CD4-positive, alpha-beta memory T cell (primary cell): ENCODE measurements at regions of chr7 and their contacts with region 1.

Region 1: GRCh38 chr7:115208710-115209560 is 287.0 kb downstream of the MDFIC start:
- DNase-seq: no peak
- H3K4me3 ChIP-seq: no peak overlapping the region
- H3K4me3 Mint-ChIP-seq: no peak overlapping the region
- H3K27ac ChIP-seq: no peak overlapping the region
- H3K27ac Mint-ChIP-seq: peak overlapping the region in 2 of 7 donors; percentile 50 to 70
- H3K4me1 ChIP-seq: peaks cover 6% of the 10 kb centered on the region
- H3K4me1 Mint-ChIP-seq: peaks cover 6 to 17% (median 7%) of the 10 kb centered on the region in 4 donors
- H3K27me3 ChIP-seq: no peaks in the 10 kb centered on the region
- H3K27me3 Mint-ChIP-seq: peaks cover 0 to 4% of the 10 kb centered on the region in 2 donors

Region 2: DNA sequence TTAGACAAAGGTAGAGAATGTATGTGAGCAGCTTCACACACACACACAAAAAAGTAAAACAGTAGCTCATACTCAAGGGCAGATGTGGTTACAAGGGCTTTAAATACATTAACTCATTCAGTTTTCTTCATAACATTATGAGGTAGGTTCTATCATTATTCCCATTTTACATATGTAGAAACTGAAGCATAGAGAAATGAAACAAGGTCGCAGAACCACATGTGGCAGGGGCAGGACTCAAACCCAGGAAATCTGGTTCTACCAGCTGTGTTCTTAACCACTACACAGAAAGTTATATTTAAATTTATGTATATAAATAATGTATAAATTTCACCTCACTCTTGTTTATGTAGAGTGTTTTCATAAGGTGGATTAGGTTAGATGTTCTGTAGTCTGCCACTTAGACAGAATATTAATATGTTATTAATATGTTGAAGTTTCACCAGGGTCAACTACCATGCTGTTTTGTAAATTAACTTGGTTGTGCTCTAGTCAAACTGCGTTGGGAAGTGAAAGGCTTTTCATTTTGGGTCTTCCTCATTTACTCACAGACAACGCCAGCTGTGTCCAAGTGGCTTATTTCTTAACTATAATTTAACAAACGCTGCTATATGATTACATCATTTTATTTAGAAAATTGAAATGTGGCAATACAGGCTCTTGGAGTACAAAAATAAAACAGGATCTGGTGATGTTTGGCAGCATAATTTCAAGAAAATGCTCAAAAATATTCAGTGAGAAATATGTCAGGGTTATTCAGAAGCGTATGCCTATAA is 148.7 kb before region 1 on chr7:
- CTCF ChIA-PET with region 1: no interaction called
- POLR2A ChIA-PET with region 1: no interaction called
- intact Hi-C with region 1: loop called (anchors 5 kb)
- DNase-seq: no peak
- H3K4me3 ChIP-seq: no peak overlapping the region
- H3K4me3 Mint-ChIP-seq: no peak overlapping the region
- H3K27ac ChIP-seq: no peak overlapping the region
- H3K27ac Mint-ChIP-seq: no peak overlapping the region
- H3K4me1 ChIP-seq: no peaks in the 10 kb centered on the region
- H3K4me1 Mint-ChIP-seq: peaks cover 0 to 1% (median 0%) of the 10 kb centered on the region in 4 donors
- H3K27me3 ChIP-seq: no peaks in the 10 kb centered on the region
- H3K27me3 Mint-ChIP-seq: no peaks in the 10 kb centered on the region